Activated naive CD4-positive, alpha-beta T cell treated with anti-CD3 and anti-CD28 coated beads for 36 hours (primary cell): ENCODE measurements at regions of chr19 and their contacts with region 1.

Region 1: GRCh38 chr19:57279418-57280066 is 743 bp upstream of the ZNF460 start:
- DNase-seq: peak; percentile 93
- H3K4me3 Mint-ChIP-seq: no peak overlapping the region
- H3K27ac Mint-ChIP-seq: no peak overlapping the region
- H3K4me1 Mint-ChIP-seq: peaks cover 31% of the 10 kb centered on the region
- H3K27me3 Mint-ChIP-seq: no peaks in the 10 kb centered on the region

Region 2: GRCh38 chr19:57320180-57321084 is 40.9 kb after region 1 on chr19 and contains the start of gene ZNF543:
- CTCF ChIA-PET with region 1: no interaction called
- intact Hi-C with region 1: loop called (anchors 2 kb)
- DNase-seq: peak; percentile 95
- H3K4me3 Mint-ChIP-seq: peak within 1 kb of the TSS; percentile 84
- H3K27ac Mint-ChIP-seq: peak within 1 kb of the TSS; percentile 84
- H3K4me1 Mint-ChIP-seq: peaks cover 21% of the 10 kb centered on the region
- H3K27me3 Mint-ChIP-seq: peaks cover 27% of the 10 kb centered on the region
- total RNA-seq, gene ZNF543: 3.2 to 3.5 TPM

Region 3: GRCh38 chr19:57362997-57363705 is 83.6 kb after region 1 on chr19 and contains the starts of genes TRAPPC2B and ZNF547:
- CTCF ChIA-PET with region 1: no interaction called
- intact Hi-C with region 1: loop called (anchors 1 kb)
- DNase-seq: peak; percentile 97
- H3K4me3 Mint-ChIP-seq: peak within 1 kb of the TSS; percentile 85
- H3K27ac Mint-ChIP-seq: peak within 1 kb of the TSS; percentile 89
- H3K4me1 Mint-ChIP-seq: peaks cover 11% of the 10 kb centered on the region
- H3K27me3 Mint-ChIP-seq: no peaks in the 10 kb centered on the region
- total RNA-seq, gene TRAPPC2B: 3.1 to 3.4 TPM
- total RNA-seq, gene ZNF547: 0.84 to 1.3 TPM

Region 4: DNA sequence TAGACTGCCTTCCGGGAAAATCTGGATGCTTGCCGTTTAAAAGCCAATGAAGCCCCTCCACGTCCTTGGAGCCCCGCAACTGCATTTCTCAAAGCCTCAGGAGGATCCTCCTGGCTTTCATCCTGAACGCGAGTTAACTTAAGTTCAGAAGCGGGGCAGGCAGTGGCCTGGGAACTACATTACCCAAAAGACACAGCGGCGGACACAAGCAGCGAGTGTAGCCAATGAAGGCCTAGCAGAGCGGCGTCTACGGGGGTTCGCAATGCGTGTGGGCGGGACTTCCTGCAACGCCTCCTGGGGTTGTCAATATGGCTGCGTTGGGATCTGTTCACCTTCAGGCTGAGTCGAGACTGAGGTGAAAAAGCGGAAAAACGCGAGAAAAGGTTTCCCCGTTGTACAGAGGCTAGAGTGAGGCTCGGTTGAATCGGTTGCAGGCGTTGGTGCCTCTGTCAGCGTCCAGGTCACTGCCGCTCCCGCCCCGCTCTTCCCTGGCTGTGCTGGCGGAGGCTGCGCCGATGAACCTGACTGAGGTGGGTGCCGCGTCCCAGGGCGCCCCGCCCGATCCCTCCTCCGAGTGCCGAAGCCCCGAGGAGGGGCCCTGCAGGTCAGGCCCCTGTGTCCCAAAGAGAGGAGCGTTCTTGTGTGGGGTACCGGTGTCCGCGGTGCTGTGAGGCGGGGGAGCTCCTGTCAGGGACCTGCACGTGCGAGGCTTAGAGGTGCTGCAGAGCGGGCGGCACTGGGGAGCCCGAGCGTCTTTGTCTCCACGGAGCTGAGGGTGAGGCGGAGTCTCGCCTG is 131.5 kb after region 1 on chr19 and contains the start of gene ZNF17:
- CTCF ChIA-PET with region 1: no interaction called
- intact Hi-C with region 1: loop called (anchors 1 kb)
- DNase-seq: peak; percentile 96
- H3K4me3 Mint-ChIP-seq: peak within 1 kb of the TSS; percentile 92
- H3K27ac Mint-ChIP-seq: peak within 1 kb of the TSS; percentile 56
- H3K4me1 Mint-ChIP-seq: peaks cover 19% of the 10 kb centered on the region
- H3K27me3 Mint-ChIP-seq: no peaks in the 10 kb centered on the region
- total RNA-seq, gene ZNF17: 4.6 to 6.3 TPM

Region 5: DNA sequence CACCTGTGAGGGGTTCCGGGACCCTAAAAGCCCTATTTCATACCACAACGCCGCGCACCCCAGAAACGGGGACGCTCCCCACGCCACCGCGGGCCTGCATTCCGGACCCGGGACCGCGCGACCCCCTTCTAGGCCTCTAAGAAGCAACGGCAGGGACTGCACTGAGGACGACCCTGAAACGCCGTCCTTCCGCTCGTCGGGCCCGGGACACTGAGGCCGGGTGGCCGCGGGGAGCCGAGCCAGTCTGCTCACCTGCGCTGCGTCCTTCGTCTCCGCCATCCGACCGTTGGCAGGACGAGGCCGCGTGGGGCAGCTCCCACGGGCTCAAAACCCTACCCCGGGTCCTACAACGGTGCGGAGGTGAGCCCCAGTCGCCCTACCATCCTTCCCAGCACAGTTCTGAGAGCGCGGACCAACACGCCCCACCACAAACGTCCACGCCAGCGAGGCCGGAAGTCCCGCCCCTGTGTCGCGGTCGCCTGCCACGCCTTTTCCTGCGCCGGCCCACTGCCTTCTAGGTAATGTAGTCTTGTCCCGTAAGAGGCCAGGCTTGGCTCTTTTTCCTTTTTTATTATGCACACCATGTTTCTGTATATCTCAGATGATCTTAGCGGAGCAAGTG is 280.0 kb after region 1 on chr19 and contains the start of gene ZNF550:
- CTCF ChIA-PET with region 1: no interaction called
- intact Hi-C with region 1: loop called (anchors 5 kb)
- DNase-seq: peak; percentile 86
- H3K4me3 Mint-ChIP-seq: peak within 1 kb of the TSS; percentile 96
- H3K27ac Mint-ChIP-seq: peak within 1 kb of the TSS; percentile 84
- H3K4me1 Mint-ChIP-seq: peaks cover 25% of the 10 kb centered on the region
- H3K27me3 Mint-ChIP-seq: no peaks in the 10 kb centered on the region
- total RNA-seq, gene ZNF550: 6.6 to 9.3 TPM

Region 6: GRCh38 chr19:58002384-58003173 is 723.0 kb after region 1 on chr19 and contains the start of gene ZNF606:
- CTCF ChIA-PET with region 1: no interaction called
- intact Hi-C with region 1: loop called (anchors 2 kb)
- DNase-seq: peak; percentile 86
- H3K4me3 Mint-ChIP-seq: peak within 1 kb of the TSS; percentile 81
- H3K27ac Mint-ChIP-seq: peak within 1 kb of the TSS; percentile 79
- H3K4me1 Mint-ChIP-seq: peaks cover 29% of the 10 kb centered on the region
- H3K27me3 Mint-ChIP-seq: no peaks in the 10 kb centered on the region
- total RNA-seq, gene ZNF606: 4.5 to 4.7 TPM